ENCODE measurements at regions of chr9 and their contacts with region 1.

Region 1: GRCh38 chr9:72726947-72727346 is 205.5 kb downstream of the TMC1 start:
- DNase-seq: no peak
- ATAC-seq: no peak
- H3K4me3 ChIP-seq: no peak overlapping the region
- H3K27ac ChIP-seq: no peak overlapping the region
- H3K4me1 ChIP-seq: no peaks in the 10 kb centered on the region
- H3K27me3 ChIP-seq: no peaks in the 10 kb centered on the region
- CTCF ChIP-seq: no peak

Region 2: DNA sequence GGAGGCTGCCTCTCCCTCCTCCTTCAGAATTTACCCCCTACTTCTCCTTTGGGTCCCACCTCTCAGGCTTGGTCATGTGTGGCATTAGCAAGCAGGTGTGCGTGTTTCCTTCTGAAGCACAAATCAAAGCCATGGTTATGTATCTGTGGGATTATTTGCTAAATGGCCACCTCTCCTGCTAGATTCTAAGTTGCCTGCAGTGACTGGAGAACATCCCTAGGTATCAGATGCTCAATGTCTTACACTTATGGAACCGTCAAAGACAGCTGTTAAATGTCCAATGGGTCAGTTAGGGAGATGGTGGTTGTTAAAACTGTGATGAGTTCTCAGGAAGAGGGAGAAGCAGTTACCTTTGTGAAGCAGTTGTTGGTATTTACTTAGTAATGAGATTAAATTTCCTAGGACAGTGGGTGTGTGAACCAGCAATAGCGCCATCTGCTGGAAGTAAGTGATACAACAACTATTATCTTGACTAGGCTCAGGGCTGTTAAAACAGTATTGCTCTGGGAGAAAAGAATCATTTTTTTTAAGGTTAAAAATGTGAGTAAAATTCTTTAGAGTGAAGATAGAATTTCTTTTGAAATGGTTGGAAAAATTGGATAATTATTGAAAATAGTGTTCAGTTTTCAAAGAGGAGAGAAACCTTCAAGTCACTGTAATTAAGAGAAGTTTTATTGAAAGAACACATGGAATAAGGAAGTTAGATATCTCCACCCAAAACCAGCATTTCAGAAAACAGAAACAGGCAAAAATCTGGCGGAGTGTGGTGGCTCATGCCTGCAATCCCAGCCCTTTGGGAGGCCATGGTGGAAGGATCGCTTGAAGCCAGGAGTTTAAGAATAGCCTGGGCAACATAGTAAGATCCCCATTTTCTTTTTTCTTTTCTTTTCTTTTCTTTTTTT is 134.2 kb before region 1 on chr9:
- intact Hi-C with region 1: no loop called
- DNase-seq: peak in 1 of 2 donors; percentile 30
- ATAC-seq: peak; percentile 77 to 88 (median 80)
- H3K4me3 ChIP-seq: no peak overlapping the region
- H3K27ac ChIP-seq: peak overlapping the region in 3 of 10 donors; percentile 4 to 60 (median 57)
- H3K4me1 ChIP-seq: peaks cover 0 to 44% (median 5%) of the 10 kb centered on the region in 9 donors
- H3K27me3 ChIP-seq: no peaks in the 10 kb centered on the region
- CTCF ChIP-seq: peak; percentile 78 to 93 (median 88)

Region 3: GRCh38 chr9:72788966-72789735 is 62.2 kb after region 1 on chr9:
- intact Hi-C with region 1: loop called in 1 of 10 experiments (anchors 2 kb)
- DNase-seq: no peak
- ATAC-seq: no peak
- H3K4me3 ChIP-seq: no peak overlapping the region
- H3K27ac ChIP-seq: no peak overlapping the region
- H3K4me1 ChIP-seq: no peaks in the 10 kb centered on the region
- H3K27me3 ChIP-seq: no peaks in the 10 kb centered on the region
- CTCF ChIP-seq: no peak